CD4-positive, alpha-beta T cell (primary cell): ENCODE measurements at regions of chr1 and their contacts with region 1.

Region 1: GRCh38 chr1:89804642-89805237 is 16.1 kb upstream of the LRRC8D start:
- DNase-seq: peak; percentile 71 to 94 (median 84)
- ATAC-seq: peak; percentile 100
- H3K4me3 ChIP-seq: no peak overlapping the region
- H3K4me3 Mint-ChIP-seq: no peak overlapping the region
- H3K27ac ChIP-seq: no peak overlapping the region
- H3K27ac Mint-ChIP-seq: no peak overlapping the region
- H3K4me1 ChIP-seq: peaks cover 3% of the 10 kb centered on the region
- H3K4me1 Mint-ChIP-seq: no peaks in the 10 kb centered on the region
- H3K27me3 ChIP-seq: no peaks in the 10 kb centered on the region
- H3K27me3 Mint-ChIP-seq: no peaks in the 10 kb centered on the region
- CTCF ChIP-seq: peak; percentile 98

Region 2: GRCh38 chr1:89770391-89770790 is 34.3 kb before region 1 on chr1:
- CTCF ChIA-PET with region 1: no interaction called
- POLR2A ChIA-PET with region 1: no interaction called
- intact Hi-C with region 1: no loop called
- DNase-seq: no peak
- ATAC-seq: no peak
- H3K4me3 ChIP-seq: no peak overlapping the region
- H3K4me3 Mint-ChIP-seq: no peak overlapping the region
- H3K27ac ChIP-seq: no peak overlapping the region
- H3K27ac Mint-ChIP-seq: no peak overlapping the region
- H3K4me1 ChIP-seq: no peaks in the 10 kb centered on the region
- H3K4me1 Mint-ChIP-seq: peaks cover 7% of the 10 kb centered on the region
- H3K27me3 ChIP-seq: no peaks in the 10 kb centered on the region
- H3K27me3 Mint-ChIP-seq: no peaks in the 10 kb centered on the region
- CTCF ChIP-seq: no peak

Region 3: DNA sequence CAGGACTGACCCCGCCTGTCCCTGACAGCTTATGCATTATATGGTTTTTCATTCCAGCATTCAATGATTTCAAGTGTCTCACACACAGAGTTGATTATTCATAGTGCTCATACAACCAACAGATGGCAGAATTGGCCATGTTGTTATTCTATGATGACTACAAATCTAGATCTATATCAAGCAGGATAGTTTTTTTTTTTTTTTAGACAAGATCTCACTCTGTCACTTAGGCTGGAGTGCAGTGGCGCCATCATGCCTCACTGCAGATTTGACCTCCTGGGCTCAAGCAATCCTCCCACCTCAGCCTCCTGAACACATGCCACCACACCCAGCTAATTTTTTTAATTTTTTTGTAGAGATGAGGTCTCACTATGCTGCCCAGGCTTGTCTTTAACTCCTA is 24.0 kb before region 1 on chr1:
- CTCF ChIA-PET with region 1: interaction called, 3 read pairs
- POLR2A ChIA-PET with region 1: no interaction called
- intact Hi-C with region 1: loop called in 1 of 2 experiments (anchors 2 kb)
- DNase-seq: peak in 3 of 14 experiments; percentile 51 to 66 (median 65)
- ATAC-seq: peak; percentile 80
- H3K4me3 ChIP-seq: no peak overlapping the region
- H3K4me3 Mint-ChIP-seq: no peak overlapping the region
- H3K27ac ChIP-seq: no peak overlapping the region
- H3K27ac Mint-ChIP-seq: no peak overlapping the region
- H3K4me1 ChIP-seq: peaks cover 13% of the 10 kb centered on the region
- H3K4me1 Mint-ChIP-seq: peaks cover 23% of the 10 kb centered on the region
- H3K27me3 ChIP-seq: no peaks in the 10 kb centered on the region
- H3K27me3 Mint-ChIP-seq: no peaks in the 10 kb centered on the region
- CTCF ChIP-seq: peak; percentile 48